ENCODE measurements at regions of chr1 and their contacts with region 1.

Region 1: DNA sequence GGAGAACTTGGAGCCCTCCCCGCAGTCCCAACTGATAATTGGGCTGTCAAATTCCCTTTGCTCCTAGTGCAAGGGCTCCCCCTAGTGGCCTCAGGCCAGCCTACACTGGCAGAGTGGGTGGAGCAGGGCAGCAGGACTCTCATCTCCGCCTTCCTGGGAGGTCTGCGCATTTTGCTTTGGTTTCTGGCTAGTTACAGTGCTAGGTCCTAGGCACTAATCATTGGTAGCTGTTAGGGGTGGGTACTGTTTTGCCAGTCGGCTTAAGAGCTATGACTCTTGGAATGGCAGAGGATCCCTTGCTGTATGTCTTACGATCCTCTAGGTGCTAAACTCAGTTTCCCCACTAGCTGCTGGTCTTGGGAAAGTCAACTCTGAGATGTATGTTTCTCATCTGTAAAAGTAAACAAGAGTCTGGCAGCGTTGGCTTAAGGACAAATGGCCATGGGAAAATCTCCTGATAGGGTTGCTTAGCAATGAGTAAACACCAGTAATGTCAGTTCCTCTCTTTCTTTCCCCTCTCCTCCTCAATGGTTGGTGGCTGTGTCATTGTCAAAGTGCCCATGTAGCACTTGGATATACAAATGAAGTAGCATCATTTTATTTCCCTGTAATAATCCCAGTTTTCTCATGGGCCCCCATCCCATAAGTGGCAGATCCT is 2.1 kb upstream of the FYB2 start:
- DNase-seq: no peak
- H3K4me3 ChIP-seq: no peak overlapping the region
- H3K27me3 ChIP-seq: no peaks in the 10 kb centered on the region
- CTCF ChIP-seq: peak; percentile 98

Region 2: DNA sequence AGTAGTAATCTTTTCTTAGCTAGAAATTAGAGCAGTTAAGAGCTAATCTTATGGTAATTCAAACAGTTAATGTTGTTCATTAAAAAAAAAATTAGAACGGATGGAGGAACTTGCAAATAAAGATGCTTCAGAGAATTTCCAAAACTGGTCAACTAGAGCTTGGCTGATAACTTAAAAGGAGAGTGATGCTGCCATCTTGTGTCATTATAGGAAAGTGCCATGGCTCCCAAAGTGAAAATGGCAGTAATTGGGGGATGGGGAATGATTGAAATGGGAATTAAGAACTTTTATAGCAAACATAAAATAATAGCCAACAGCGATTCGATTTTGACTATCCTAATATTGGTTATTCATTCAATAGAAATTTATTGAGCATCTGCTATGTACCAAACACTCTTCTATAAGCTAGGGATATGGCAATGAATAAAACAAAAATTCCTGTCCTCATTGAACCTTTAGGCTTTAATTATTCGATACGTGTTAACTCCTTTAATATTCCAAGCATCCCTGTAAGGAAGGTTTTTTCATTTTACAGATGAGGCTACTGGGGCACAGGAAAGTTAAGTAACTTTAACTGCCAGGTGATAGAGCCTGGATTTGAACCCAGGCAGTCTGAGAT is 236.2 kb before region 1 on chr1:
- CTCF ChIA-PET with region 1: interaction called, 17 read pairs
- POLR2A ChIA-PET with region 1: no interaction called
- DNase-seq: no peak
- H3K4me3 ChIP-seq: no peak overlapping the region
- H3K27me3 ChIP-seq: no peaks in the 10 kb centered on the region
- CTCF ChIP-seq: peak; percentile 78

Region 3: DNA sequence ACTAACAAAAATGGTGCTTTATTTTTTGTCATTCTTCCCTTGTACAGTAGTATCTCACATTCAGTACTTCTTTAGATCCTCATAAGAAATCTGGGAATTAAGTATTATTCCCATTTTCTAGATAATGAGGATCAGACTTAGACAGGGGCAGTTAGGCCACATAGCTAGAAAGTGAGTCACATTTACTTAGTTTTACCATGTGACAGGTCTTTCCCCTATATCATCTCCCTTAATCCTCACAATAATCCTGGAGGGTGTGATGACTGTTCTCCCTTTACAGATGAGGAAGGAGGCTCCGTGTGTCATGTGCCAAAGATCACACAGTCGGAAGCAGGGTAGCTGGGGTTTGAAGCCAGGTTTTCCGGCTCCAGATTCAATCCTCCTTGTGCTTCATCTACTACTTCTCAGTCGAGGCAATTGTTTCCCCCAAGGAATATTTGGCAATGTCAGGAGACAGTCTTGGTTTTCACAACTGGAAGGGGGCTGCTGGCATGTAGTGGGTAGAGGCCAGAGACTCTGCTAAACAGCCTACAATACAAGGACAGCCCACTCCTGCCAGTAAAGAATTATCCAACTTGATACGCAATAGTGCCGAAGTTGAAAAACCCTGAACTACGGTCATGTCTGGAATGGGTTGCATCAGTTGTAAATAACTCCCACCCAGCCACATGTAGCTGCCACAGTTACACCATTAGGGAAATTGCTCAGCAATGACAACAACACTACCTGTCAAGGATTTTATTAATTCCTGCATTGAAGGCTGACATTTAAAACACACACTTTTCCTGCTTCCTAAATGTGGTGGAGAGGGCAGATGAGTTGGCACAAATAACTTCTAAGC is 90.0 kb after region 1 on chr1:
- CTCF ChIA-PET with region 1: no interaction called
- POLR2A ChIA-PET with region 1: no interaction called
- DNase-seq: no peak
- H3K4me3 ChIP-seq: no peak overlapping the region
- H3K27me3 ChIP-seq: no peaks in the 10 kb centered on the region
- CTCF ChIP-seq: no peak